ENCODE measurements at regions of chr11 and their contacts with region 1.

Region 1: GRCh38 chr11:59753650-59754493 is 1.3 kb upstream of the STX3 start:
- DNase-seq: peak; percentile 78 to 91 (median 86)
- ATAC-seq: peak; percentile 59 to 80 (median 70)
- H3K4me3 ChIP-seq: peak overlapping the region; percentile 66 to 94 (median 91)
- H3K27ac ChIP-seq: peak overlapping the region; percentile 7 to 96 (median 93)
- H3K4me1 ChIP-seq: peaks cover 0 to 15% (median 7%) of the 10 kb centered on the region in 3 donors
- H3K27me3 ChIP-seq: no peaks in the 10 kb centered on the region
- CTCF ChIP-seq: peak; percentile 86 to 96 (median 90)

Region 2: DNA sequence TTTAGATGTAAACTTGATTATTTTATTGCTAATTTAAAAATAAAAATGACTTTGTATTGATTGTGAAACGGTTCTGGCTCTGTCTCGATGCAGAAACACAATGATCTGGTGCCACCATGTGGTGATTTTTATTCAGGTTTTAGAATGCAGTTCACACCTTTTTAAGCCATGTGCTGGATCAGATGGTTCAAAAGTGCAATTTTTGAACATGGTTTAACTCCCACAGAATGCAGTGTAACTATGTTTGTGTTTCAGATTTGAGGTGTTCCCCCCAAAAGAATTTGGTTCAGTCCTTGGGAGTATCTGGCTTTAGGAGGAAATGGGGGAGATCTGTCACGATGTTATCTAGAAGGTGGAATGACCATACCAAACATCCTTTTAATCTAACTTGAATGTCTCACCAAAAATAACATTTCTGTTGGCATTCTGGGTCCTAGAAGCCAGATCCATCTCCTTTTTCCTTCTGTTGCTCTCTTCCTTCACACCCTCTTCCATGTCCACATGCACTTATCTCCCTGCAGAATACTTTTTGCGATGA is 48.8 kb after region 1 on chr11:
- intact Hi-C with region 1: loop called in 2 of 3 experiments (anchors 5 kb)
- DNase-seq: peak in 2 of 6 donors; percentile 29 to 48
- ATAC-seq: peak; percentile 79 to 95 (median 90)
- H3K4me3 ChIP-seq: no peak overlapping the region
- H3K27ac ChIP-seq: no peak overlapping the region
- H3K4me1 ChIP-seq: no peaks in the 10 kb centered on the region
- H3K27me3 ChIP-seq: no peaks in the 10 kb centered on the region
- CTCF ChIP-seq: peak; percentile 30 to 57 (median 42)

Region 3: GRCh38 chr11:60756307-60757032 is 1002.6 kb after region 1 on chr11 and contains the start of gene MS4A15:
- intact Hi-C with region 1: no loop called
- DNase-seq: peak in 2 of 6 donors; percentile 22 to 46
- ATAC-seq: peak; percentile 77 to 91 (median 86)
- H3K4me3 ChIP-seq: no peak within 1 kb of the TSS
- H3K27ac ChIP-seq: no peak within 1 kb of the TSS
- H3K4me1 ChIP-seq: peaks cover 0 to 5% (median 3%) of the 10 kb centered on the region in 3 donors
- H3K27me3 ChIP-seq: no peaks in the 10 kb centered on the region
- CTCF ChIP-seq: peak; percentile 23 to 51 (median 34)
- total RNA-seq, gene MS4A15: 0.09 TPM in 1 of 6 donors, not detected in the others